A549 (cell line): ENCODE measurements at regions of chr15 and their contacts with region 1.

Region 1: GRCh38 chr15:57561041-57561711 is 30.5 kb upstream of the MYZAP start:
- DNase-seq: peak; percentile 72 to 77
- ATAC-seq: peak; percentile 94 to 98
- H3K4me3 ChIP-seq: no peak overlapping the region
- H3K27ac ChIP-seq: peak overlapping the region in 1 of 2 experiments; percentile 8; a peak in 2 of 6 replicates
- H3K4me1 ChIP-seq: peaks cover 19% of the 10 kb centered on the region
- CTCF ChIP-seq: peak; percentile 96
- EP300 ChIP-seq: no peak
- POLR2A ChIP-seq: no peak
- RAD21 ChIP-seq: peak; percentile 87

Region 2: GRCh38 chr15:57580866-57581265 is 19.7 kb after region 1 on chr15:
- CTCF ChIA-PET with region 1: interaction called, 20 read pairs
- POLR2A ChIA-PET with region 1: no interaction called
- DNase-seq: no peak
- ATAC-seq: peak in 1 of 2 experiments; percentile 60; a peak in 2 of 6 replicates
- H3K4me3 ChIP-seq: no peak overlapping the region
- H3K27ac ChIP-seq: no peak overlapping the region
- H3K4me1 ChIP-seq: no peaks in the 10 kb centered on the region
- CTCF ChIP-seq: no peak
- EP300 ChIP-seq: no peak
- POLR2A ChIP-seq: no peak
- RAD21 ChIP-seq: no peak

Region 3: GRCh38 chr15:57611938-57612337 is 50.8 kb after region 1 on chr15:
- CTCF ChIA-PET with region 1: interaction called, 286 read pairs
- POLR2A ChIA-PET with region 1: interaction called, 3 read pairs
- DNase-seq: peak; percentile 35 to 62
- ATAC-seq: peak; percentile 63 to 75
- H3K4me3 ChIP-seq: no peak overlapping the region
- H3K27ac ChIP-seq: peak overlapping the region in 1 of 2 experiments; percentile 78; a peak in 4 of 6 replicates
- H3K4me1 ChIP-seq: peaks cover 62% of the 10 kb centered on the region
- CTCF ChIP-seq: peak; percentile 64
- EP300 ChIP-seq: no peak
- POLR2A ChIP-seq: no peak
- RAD21 ChIP-seq: peak; percentile 77 to 84

Region 4: GRCh38 chr15:57635300-57635909 is 74.2 kb after region 1 on chr15:
- CTCF ChIA-PET with region 1: interaction called, 16 read pairs
- POLR2A ChIA-PET with region 1: no interaction called
- DNase-seq: no peak
- ATAC-seq: peak in 1 of 2 experiments; percentile 36; a peak in 1 of 6 replicates
- H3K4me3 ChIP-seq: no peak overlapping the region
- H3K27ac ChIP-seq: no peak overlapping the region
- H3K4me1 ChIP-seq: no peaks in the 10 kb centered on the region
- CTCF ChIP-seq: no peak
- EP300 ChIP-seq: no peak
- POLR2A ChIP-seq: no peak
- RAD21 ChIP-seq: no peak

Region 5: GRCh38 chr15:57667171-57667849 is 106.1 kb after region 1 on chr15:
- CTCF ChIA-PET with region 1: interaction called, 22 read pairs
- POLR2A ChIA-PET with region 1: no interaction called
- DNase-seq: peak; percentile 65 to 75
- ATAC-seq: peak; percentile 82 to 92
- H3K4me3 ChIP-seq: no peak overlapping the region
- H3K27ac ChIP-seq: no peak overlapping the region
- H3K4me1 ChIP-seq: peaks cover 18% of the 10 kb centered on the region
- CTCF ChIP-seq: peak; percentile 68
- EP300 ChIP-seq: no peak
- POLR2A ChIP-seq: no peak
- RAD21 ChIP-seq: peak; percentile 78 to 80

Region 6: GRCh38 chr15:57861036-57861638 is 300.0 kb after region 1 on chr15:
- CTCF ChIA-PET with region 1: interaction called, 29 read pairs
- POLR2A ChIA-PET with region 1: no interaction called
- DNase-seq: peak; percentile 28 to 74
- ATAC-seq: peak; percentile 28 to 78; a peak in 3 of 6 replicates
- H3K4me3 ChIP-seq: no peak overlapping the region
- H3K27ac ChIP-seq: no peak overlapping the region
- H3K4me1 ChIP-seq: no peaks in the 10 kb centered on the region
- CTCF ChIP-seq: peak; percentile 94
- EP300 ChIP-seq: no peak
- POLR2A ChIP-seq: no peak
- RAD21 ChIP-seq: peak; percentile 63 to 73